ENCODE measurements at regions of chr2 and their contacts with region 1.

Region 1: GRCh38 chr2:230751062-230751461 is 38.4 kb downstream of the CAB39 start:
- DNase-seq: no peak
- ATAC-seq: peak; percentile 84
- H3K4me3 Mint-ChIP-seq: no peak overlapping the region
- H3K27ac Mint-ChIP-seq: no peak overlapping the region
- H3K4me1 Mint-ChIP-seq: peaks cover 75% of the 10 kb centered on the region
- H3K27me3 Mint-ChIP-seq: no peaks in the 10 kb centered on the region

Region 2: DNA sequence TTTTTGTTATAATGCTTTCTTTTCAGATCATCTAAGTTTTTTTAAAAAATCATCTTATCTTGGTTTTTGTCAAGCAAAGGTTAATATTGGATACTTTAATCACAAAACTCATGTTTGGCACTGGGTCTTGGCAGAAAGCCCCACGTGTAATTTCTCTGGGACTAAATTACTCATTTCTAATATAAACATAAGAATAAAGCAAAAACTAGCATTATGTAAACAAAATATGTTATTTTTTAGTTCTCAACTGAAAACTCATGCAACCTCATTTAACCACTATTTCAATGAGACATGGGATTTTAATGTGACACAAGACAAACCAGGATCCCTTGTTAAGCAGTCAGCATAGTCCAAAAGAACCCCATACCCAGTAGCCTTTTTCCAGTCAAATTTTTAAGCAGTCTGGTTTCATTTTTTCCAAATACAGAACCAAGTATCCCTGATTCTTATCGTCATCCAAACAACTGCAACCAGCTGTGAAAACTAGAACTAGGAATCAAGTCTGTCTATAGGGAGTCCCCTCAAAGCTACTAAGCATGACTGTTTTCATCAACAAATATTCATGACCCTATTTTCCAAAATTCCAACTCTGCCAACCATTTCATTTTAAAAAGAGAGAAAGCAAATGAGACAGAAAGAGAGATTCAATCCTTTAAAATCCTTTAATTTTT is 1507.0 kb before region 1 on chr2:
- CTCF ChIA-PET with region 1: no interaction called
- POLR2A ChIA-PET with region 1: no interaction called
- intact Hi-C with region 1: no loop called
- DNase-seq: no peak
- ATAC-seq: no peak
- H3K4me3 Mint-ChIP-seq: no peak overlapping the region
- H3K27ac Mint-ChIP-seq: no peak overlapping the region
- H3K4me1 Mint-ChIP-seq: no peaks in the 10 kb centered on the region
- H3K27me3 Mint-ChIP-seq: no peaks in the 10 kb centered on the region

Region 3: DNA sequence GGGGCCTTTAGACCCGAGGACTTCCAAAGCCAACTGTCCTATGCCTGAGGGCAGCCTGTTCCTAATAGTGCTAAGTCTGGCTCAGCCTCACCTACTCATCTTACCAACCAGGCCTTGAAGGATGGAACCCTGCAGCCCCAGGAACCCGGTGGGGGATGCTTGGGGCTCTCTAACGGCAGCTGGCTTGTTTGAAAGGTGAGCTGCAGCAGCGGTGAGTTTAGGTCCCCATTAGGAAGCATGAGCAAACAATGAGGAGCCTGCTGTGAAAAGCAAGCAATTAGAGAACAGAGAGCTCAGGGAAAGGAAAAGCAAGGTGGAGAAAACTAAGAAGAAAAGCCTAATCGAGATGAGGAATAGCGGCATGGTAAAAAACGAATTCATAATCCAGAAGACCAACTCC is 571.2 kb before region 1 on chr2:
- CTCF ChIA-PET with region 1: no interaction called
- POLR2A ChIA-PET with region 1: no interaction called
- intact Hi-C with region 1: no loop called
- DNase-seq: no peak
- ATAC-seq: no peak
- H3K4me3 Mint-ChIP-seq: no peak overlapping the region
- H3K27ac Mint-ChIP-seq: no peak overlapping the region
- H3K4me1 Mint-ChIP-seq: no peaks in the 10 kb centered on the region
- H3K27me3 Mint-ChIP-seq: no peaks in the 10 kb centered on the region

Region 4: GRCh38 chr2:230737791-230738226 is 13.3 kb before region 1 on chr2:
- CTCF ChIA-PET with region 1: no interaction called
- POLR2A ChIA-PET with region 1: no interaction called
- intact Hi-C with region 1: loop called in 1 of 2 experiments (anchors 2 kb)
- DNase-seq: no peak
- ATAC-seq: no peak
- H3K4me3 Mint-ChIP-seq: no peak overlapping the region
- H3K27ac Mint-ChIP-seq: peak overlapping the region; percentile 37
- H3K4me1 Mint-ChIP-seq: peaks cover 71% of the 10 kb centered on the region
- H3K27me3 Mint-ChIP-seq: no peaks in the 10 kb centered on the region

Region 5: GRCh38 chr2:230805353-230806017 is 54.4 kb after region 1 on chr2:
- CTCF ChIA-PET with region 1: no interaction called
- POLR2A ChIA-PET with region 1: no interaction called
- intact Hi-C with region 1: no loop called
- DNase-seq: peak; percentile 46
- ATAC-seq: peak; percentile 76
- H3K4me3 Mint-ChIP-seq: no peak overlapping the region
- H3K27ac Mint-ChIP-seq: peak overlapping the region; percentile 70
- H3K4me1 Mint-ChIP-seq: peaks cover 24% of the 10 kb centered on the region
- H3K27me3 Mint-ChIP-seq: no peaks in the 10 kb centered on the region

Region 6: DNA sequence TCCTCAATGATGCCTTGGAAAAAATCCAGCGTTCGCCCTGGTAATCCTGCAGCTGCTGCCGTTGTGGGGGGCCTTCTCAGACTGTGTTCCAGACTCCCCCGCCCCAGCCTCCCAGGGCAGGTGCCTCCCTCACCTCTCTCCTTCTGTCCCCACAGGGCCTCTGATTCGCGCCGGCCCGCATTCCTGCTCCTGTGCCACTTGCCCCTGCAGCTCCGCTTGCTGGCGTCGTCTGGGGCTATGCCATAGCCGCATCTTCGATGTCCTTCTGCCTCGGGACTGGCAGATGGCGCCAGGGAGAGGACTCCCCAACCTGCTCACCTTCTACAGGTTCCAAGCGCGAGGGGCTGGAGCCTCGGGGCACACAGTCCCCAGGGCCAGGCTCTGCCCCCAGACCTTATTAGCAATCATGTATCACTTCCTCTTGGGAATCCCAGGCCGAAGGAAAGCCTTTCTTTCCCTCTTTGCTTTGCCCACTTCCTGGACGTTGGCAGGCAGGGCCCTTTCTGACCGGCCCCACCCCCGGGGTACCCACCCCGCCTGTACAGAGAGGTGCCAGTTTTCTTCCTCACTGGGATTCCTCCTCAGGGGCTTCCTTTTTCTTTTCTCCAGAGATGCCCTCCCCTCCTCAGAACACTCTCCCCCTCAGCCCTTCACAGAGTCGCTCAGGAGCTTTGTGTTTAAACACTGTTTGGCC is 249.3 kb after region 1 on chr2:
- CTCF ChIA-PET with region 1: no interaction called
- POLR2A ChIA-PET with region 1: no interaction called
- intact Hi-C with region 1: no loop called
- DNase-seq: peak; percentile 33
- ATAC-seq: no peak
- H3K4me3 Mint-ChIP-seq: no peak overlapping the region
- H3K27ac Mint-ChIP-seq: no peak overlapping the region
- H3K4me1 Mint-ChIP-seq: no peaks in the 10 kb centered on the region
- H3K27me3 Mint-ChIP-seq: peaks cover 43% of the 10 kb centered on the region